Activated CD4-positive, alpha-beta T cell treated with anti-CD3 and anti-CD28 coated beads, Interleukin-2, amount 10 ng/mL, durations not matched to agents 7 days and 5 days (primary cell): ENCODE measurements at regions of chr6 and their contacts with region 1.

Region 1: GRCh38 chr6:125956506-125957390 is at the start of gene HINT3:
- DNase-seq: peak; percentile 98
- H3K4me3 Mint-ChIP-seq: no peak within 1 kb of the TSS
- H3K27ac Mint-ChIP-seq: no peak within 1 kb of the TSS
- H3K4me1 Mint-ChIP-seq: peaks cover 7% of the 10 kb centered on the region
- H3K27me3 Mint-ChIP-seq: peaks cover 3% of the 10 kb centered on the region
- total RNA-seq, gene HINT3: 7.5 to 8.3 TPM

Region 2: GRCh38 chr6:125779924-125780539 is 176.7 kb before region 1 on chr6:
- CTCF ChIA-PET with region 1: interaction called, 19 read pairs
- POLR2A ChIA-PET with region 1: interaction called, 4 read pairs
- DNase-seq: peak; percentile 82
- H3K4me3 Mint-ChIP-seq: no peak overlapping the region
- H3K27ac Mint-ChIP-seq: no peak overlapping the region
- H3K4me1 Mint-ChIP-seq: peaks cover 18% of the 10 kb centered on the region
- H3K27me3 Mint-ChIP-seq: peaks cover 19% of the 10 kb centered on the region

Region 3: DNA sequence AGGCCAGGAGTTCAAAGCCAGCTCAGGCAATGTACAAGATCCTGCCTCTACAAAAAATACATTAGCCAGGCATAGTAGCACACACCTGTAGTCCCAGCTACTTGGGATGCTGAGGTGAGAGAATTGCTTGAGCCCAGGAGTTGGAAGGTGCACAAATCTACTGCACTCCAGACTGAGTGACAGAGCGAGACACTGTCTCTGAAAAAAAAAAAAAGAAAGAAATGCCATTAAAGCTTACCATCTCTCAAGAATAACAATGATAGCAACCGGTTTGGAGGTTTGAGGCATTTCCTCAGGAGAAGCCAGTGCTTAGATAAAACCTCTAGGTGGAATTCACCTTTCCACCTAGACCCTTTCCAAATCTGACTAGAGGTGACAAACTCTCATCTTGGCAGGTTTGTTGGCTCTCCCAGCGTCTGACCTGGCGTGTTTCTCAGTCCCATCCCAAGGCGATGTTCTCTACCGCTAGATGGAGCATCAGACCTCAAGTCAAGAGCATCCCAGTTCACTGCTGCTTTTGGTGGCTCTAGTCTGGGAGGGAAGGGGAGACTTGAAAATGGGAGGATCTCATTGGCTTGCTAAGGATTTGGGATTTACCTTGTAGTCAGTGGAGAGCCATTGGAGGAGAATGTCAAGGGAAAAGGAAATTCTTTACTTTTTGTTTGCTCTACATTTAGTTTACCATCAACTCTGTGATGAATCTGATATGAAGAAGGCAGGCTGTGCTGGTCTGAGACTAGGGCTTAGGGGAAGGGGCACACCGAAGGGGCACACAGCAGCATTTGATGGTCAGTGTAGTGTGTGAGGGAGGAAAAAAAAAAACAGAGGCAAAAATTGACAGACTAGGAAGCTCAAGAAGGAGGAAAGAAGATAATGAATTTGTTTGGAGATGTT is 98.1 kb before region 1 on chr6:
- CTCF ChIA-PET with region 1: interaction called, 11 read pairs
- POLR2A ChIA-PET with region 1: no interaction called
- DNase-seq: peak; percentile 39
- H3K4me3 Mint-ChIP-seq: no peak overlapping the region
- H3K27ac Mint-ChIP-seq: peak overlapping the region; percentile 64
- H3K4me1 Mint-ChIP-seq: peaks cover 2% of the 10 kb centered on the region
- H3K27me3 Mint-ChIP-seq: no peaks in the 10 kb centered on the region

Region 4: GRCh38 chr6:125899726-125900182 is 57.0 kb before region 1 on chr6:
- CTCF ChIA-PET with region 1: interaction called, 18 read pairs
- POLR2A ChIA-PET with region 1: no interaction called
- DNase-seq: no peak
- H3K4me3 Mint-ChIP-seq: no peak overlapping the region
- H3K27ac Mint-ChIP-seq: no peak overlapping the region
- H3K4me1 Mint-ChIP-seq: peaks cover 9% of the 10 kb centered on the region
- H3K27me3 Mint-ChIP-seq: no peaks in the 10 kb centered on the region

Region 5: GRCh38 chr6:125923987-125924568 is 32.7 kb before region 1 on chr6:
- CTCF ChIA-PET with region 1: interaction called, 33 read pairs
- POLR2A ChIA-PET with region 1: no interaction called
- DNase-seq: peak; percentile 44
- H3K4me3 Mint-ChIP-seq: no peak overlapping the region
- H3K27ac Mint-ChIP-seq: peak overlapping the region; percentile 71
- H3K4me1 Mint-ChIP-seq: peaks cover 61% of the 10 kb centered on the region
- H3K27me3 Mint-ChIP-seq: no peaks in the 10 kb centered on the region

Region 6: GRCh38 chr6:125974214-125974866 is 17.6 kb after region 1 on chr6:
- CTCF ChIA-PET with region 1: interaction called, 18 read pairs
- POLR2A ChIA-PET with region 1: no interaction called
- DNase-seq: no peak
- H3K4me3 Mint-ChIP-seq: no peak overlapping the region
- H3K27ac Mint-ChIP-seq: no peak overlapping the region
- H3K4me1 Mint-ChIP-seq: peaks cover 6% of the 10 kb centered on the region
- H3K27me3 Mint-ChIP-seq: no peaks in the 10 kb centered on the region